Mucosa of descending colon (tissue), 3 donors: ENCODE measurements at regions of chr3 and their contacts with region 1.

Region 1: GRCh38 chr3:185767002-185767688 is 57.7 kb downstream of the IGF2BP2 start:
- DNase-seq: peak in 1 of 3 donors; percentile 25
- ATAC-seq: peak; percentile 65
- H3K4me3 ChIP-seq: no peak overlapping the region
- H3K4me1 ChIP-seq: peaks cover 11% of the 10 kb centered on the region
- CTCF ChIP-seq: no peak

Region 2: DNA sequence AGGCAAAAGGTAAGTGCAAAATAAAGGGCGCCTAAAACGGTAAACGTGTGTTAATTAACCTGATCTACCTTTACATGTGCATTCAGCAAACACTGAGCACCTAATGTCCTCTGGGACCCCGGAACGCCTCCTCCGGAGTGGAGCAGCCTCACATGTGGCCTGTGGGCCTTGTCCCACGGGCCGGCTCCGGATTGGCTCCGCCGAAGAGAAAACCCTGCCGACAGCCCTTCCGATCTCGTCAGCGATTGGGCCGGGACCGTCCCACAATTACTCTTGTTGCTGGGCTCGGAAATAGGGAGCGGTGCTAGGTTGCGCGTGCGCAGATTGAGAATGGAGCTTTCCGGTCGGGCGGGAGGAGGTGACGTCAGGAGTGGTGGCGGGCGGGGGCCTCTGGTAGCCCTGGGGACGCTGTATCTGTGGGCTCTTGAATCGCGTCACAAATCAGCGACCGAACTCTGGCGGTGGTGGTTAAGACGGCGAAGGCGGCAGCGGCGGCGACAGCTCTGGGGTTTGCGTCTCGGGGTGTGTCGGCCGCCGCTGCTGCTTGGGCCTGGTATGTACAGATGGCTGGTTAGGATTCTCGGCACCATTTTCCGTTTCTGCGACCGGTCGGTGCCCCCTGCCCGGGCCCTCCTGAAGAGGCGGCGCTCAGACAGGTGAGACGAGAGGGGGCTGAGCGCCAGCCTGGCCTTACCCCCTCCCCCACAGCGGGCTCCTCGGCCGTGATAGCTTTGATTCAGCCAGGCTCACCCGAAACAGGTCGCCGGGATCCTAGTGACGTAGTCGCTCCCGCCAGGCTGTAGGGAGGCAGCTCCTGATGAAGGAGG is 181.1 kb before region 1 on chr3 and contains the start of gene SENP2:
- intact Hi-C with region 1: no loop called
- DNase-seq: peak; percentile 99 to 100 (median 100)
- ATAC-seq: peak; percentile 97
- H3K4me3 ChIP-seq: peak within 1 kb of the TSS; percentile 61
- H3K4me1 ChIP-seq: peaks cover 20% of the 10 kb centered on the region
- CTCF ChIP-seq: no peak
- total RNA-seq, gene SENP2: 27.1 to 40.5 (median 28.4) TPM

Region 3: DNA sequence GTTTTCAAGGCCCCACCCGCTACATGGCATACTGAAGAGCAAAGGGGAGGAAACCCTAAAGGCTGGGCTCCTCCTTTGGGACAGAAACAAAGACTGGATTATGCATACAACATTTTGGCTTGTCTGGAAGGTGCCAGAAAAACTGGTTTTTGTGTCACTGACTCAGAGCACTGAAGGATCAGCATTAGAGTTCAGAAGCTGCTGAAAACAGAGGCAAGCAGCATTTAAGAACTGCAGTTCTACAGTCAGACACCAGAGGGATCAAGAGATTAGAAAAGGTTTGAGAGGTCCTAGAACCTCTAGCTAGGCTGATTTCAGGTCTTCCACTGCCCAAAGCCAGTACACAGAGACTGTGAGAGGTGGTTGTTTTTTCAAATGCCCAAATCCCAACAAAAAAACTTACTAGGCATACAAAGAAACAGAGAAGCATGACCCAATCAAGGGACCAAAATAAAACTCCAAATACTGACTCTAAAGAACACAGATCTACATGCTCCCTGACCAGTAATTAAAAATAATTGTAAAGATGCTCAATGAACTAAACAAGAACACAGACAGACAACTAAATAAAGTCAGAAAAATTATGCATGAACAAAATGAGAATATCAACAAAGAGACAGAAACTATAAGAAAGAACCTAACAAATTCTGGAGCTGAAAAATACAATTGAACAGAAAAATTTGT is 89.9 kb before region 1 on chr3:
- intact Hi-C with region 1: loop called in 1 of 2 experiments (anchors 5 kb)
- DNase-seq: peak in 1 of 3 donors; percentile 75
- ATAC-seq: peak; percentile 86
- H3K4me3 ChIP-seq: no peak overlapping the region
- H3K4me1 ChIP-seq: no peaks in the 10 kb centered on the region
- CTCF ChIP-seq: peak; percentile 33